GM13976 (cell line): ENCODE measurements at regions of chr3 and their contacts with region 1.

Region 1: GRCh38 chr3:12135029-12135657 is 23.6 kb downstream of the TIMP4 start:
- DNase-seq: peak; percentile 48
- CTCF ChIP-seq: peak; percentile 95

Region 2: DNA sequence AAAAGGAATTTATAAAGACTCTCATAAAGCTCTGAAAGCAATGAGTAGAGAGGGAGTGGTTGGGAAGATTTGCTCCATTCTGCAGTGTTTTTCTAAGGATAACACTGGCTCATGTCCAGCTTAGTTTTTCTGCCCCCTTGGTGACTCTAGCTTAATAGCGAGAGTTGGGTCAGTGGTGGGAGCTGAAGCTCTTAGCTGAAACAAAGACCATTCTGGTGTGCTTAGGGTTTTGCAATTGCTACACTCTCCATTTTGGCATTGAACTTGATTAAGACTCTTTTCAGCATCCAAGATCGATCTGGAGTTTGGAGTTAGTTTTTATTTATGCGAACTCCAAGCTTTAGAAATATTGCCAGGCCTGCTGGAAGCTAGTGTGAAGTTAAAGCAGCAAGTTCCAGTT is 765.0 kb before region 1 on chr3:
- in situ Hi-C with region 1: no loop called
- DNase-seq: no peak
- CTCF ChIP-seq: no peak

Region 3: GRCh38 chr3:12479919-12480425 is 344.8 kb after region 1 on chr3:
- in situ Hi-C with region 1: loop called (anchors 5 kb)
- DNase-seq: peak; percentile 78
- CTCF ChIP-seq: peak; percentile 55